Thyroid gland (tissue), 4 donors: ENCODE measurements at regions of chr2 and their contacts with region 1.

Region 1: DNA sequence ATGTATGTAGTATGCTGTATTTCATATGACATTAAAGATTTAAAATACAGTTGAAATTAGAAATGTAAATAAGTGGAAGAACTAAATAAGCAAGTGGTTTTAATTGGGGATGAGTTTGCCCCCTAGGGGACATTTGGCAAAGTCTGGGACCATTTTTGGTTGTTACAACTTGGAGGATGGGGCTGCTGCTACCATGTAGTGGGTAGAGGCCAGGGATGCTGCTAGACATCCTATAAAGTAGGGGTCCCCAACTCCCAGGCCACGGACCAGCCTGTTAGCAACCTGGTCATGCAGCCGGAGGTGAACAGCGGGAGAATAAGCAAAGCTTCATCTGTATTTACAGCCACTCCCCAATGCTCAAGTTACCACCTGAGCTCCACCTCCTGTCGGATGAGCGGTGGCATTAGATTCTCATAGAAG is 27.9 kb upstream of the ASNSD1 start:
- DNase-seq: peak; percentile 26 to 28
- H3K4me3 ChIP-seq: no peak overlapping the region
- H3K27ac ChIP-seq: no peak overlapping the region
- H3K4me1 ChIP-seq: no peaks in the 10 kb centered on the region
- H3K27me3 ChIP-seq: no peaks in the 10 kb centered on the region
- CTCF ChIP-seq: peak in 4 of 6 experiments; percentile 20 to 49 (median 47)
- POLR2A ChIP-seq: no peak

Region 2: DNA sequence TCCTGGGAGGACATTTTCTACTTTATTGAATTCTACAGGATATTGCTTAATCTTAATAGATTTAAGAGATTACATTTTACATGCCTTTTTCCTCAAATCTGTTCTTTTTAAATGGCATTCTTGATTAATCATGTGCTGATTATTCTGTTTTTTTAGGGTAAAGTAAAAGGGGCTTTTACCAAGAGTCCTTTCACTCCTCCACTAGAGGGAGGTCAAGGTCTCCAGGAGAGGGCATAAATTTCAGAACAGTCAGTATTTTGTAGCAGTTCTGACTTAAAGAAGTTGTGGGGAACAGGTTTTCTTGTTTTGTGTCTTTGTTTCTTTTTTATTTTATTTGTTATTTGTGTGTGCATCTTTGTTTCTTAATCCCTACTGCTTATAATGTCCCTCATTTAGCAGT is 166.7 kb before region 1 on chr2:
- intact Hi-C with region 1: loop called (anchors 10 kb)
- DNase-seq: no peak
- H3K4me3 ChIP-seq: no peak overlapping the region
- H3K27ac ChIP-seq: no peak overlapping the region
- H3K4me1 ChIP-seq: peaks cover 0 to 9% of the 10 kb centered on the region in 2 donors
- H3K27me3 ChIP-seq: no peaks in the 10 kb centered on the region
- CTCF ChIP-seq: peak in 4 of 6 experiments; percentile 46 to 58 (median 50)
- POLR2A ChIP-seq: no peak

Region 3: DNA sequence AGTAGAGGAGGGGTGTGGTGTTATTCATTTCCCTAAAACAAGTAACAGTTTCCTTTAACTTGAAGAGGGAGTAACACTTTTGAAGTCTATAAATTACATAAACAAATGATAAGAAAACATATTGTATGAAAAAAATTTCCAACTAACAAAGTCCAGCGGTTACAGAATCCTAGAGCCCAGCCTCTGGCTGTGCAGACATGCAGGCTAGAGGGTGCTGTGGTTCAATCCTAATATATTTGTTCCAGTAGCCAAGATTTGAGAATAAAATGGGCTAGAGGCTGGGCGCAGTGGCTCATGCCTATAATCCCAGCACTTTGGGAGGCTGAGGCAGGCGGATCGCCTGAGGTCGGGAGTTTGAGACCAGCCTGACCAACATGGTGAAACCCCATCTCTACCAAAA is 135.2 kb before region 1 on chr2:
- intact Hi-C with region 1: loop called (anchors 10 kb)
- DNase-seq: no peak
- H3K4me3 ChIP-seq: no peak overlapping the region
- H3K27ac ChIP-seq: no peak overlapping the region
- H3K4me1 ChIP-seq: no peaks in the 10 kb centered on the region
- H3K27me3 ChIP-seq: no peaks in the 10 kb centered on the region
- CTCF ChIP-seq: no peak
- POLR2A ChIP-seq: no peak

Region 4: DNA sequence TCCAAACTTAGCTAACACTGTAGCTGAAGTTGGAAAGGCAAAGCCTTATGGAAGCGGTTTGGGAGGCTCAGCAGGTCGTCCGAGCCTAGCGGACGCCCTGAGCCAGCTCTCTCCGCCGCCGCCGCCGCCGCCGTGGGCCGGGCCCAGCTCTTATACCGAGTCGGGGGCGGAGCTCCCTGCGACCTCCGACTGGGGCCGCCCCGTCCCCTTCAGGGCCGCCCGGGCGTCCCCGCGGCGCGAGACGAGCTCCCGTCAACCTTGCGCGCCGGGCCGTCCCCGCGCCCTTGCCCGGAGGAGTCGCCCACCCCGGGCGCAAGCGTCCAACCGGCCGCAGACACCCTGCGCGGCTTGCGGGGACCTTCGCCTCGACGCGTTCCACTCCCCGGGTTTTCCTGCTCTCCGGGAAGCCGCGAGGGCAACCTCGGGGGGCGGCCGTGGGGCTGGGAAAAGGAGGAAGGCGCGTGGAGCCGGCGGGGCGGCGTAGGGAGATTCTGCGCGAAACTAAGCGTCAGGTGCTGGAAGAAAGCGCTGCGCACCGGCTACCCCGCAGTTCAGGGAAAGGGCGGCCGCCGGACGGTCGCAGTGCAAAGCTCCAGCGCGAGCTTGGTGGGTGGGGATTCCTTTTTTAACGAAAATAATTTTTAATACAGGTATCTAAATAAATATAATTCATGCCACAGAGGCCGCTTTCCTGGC is 52.6 kb before region 1 on chr2 and contains the start of gene SLC40A1:
- intact Hi-C with region 1: loop called (anchors 10 kb)
- DNase-seq: peak; percentile 89 to 90
- H3K4me3 ChIP-seq: peak within 1 kb of the TSS; percentile 37 to 79 (median 72)
- H3K27ac ChIP-seq: peak within 1 kb of the TSS; percentile 85 to 96 (median 92)
- H3K4me1 ChIP-seq: peaks cover 30 to 39% of the 10 kb centered on the region in 2 donors
- H3K27me3 ChIP-seq: no peaks in the 10 kb centered on the region
- CTCF ChIP-seq: peak in 1 of 6 experiments; percentile 1
- POLR2A ChIP-seq: peak; percentile 58 to 98
- total RNA-seq, gene SLC40A1: 115 to 285 (median 133) TPM

Region 5: DNA sequence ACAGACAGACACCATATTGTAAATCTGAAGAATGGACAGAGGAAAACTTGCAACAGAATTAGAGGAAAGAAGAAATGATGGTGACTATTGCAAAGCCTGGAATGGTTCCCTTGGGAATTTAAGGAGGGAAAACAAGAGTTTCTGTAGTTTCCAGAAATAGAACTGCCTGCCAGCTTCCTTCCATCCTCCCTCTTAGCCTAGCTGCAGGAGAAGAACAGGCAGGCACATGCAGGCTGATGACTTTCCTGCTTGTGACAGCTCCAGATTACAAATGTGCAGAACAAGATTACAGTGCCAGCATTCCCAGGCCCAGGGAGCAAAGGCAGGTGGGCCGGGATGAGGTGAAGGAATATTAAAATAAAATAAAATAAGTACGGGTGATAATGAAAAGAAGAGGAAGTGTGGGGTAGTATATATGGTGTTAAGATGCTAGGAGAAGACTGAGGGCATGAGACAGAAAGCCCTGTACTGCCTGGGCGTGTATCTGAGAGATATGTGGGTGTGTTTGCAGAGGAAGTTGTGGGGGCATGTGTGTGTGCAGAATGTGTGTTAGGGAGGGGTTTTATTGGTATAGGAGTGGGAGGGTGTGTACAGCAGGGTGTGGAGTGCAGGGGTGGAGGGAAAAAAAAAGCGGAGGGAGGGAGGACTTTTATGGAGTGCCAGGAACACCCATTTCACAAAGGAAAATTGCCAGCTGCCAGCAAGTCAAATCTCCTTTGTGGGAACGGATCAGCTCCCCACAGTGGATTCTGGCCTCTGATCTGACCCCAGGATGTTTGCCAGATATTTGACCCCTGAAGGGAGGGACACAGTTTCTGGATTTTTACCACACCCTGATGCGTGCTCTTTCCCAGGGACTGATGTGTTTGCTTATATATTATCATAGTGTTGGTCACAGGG is 945.0 kb after region 1 on chr2:
- intact Hi-C with region 1: no loop called
- DNase-seq: peak in 1 of 2 donors; percentile 5
- H3K4me3 ChIP-seq: no peak overlapping the region
- H3K27ac ChIP-seq: no peak overlapping the region
- H3K4me1 ChIP-seq: no peaks in the 10 kb centered on the region
- H3K27me3 ChIP-seq: no peaks in the 10 kb centered on the region
- CTCF ChIP-seq: no peak
- POLR2A ChIP-seq: no peak